OCI-LY7 (cell line): ENCODE measurements at regions of chr15 and their contacts with region 1.

Region 1: DNA sequence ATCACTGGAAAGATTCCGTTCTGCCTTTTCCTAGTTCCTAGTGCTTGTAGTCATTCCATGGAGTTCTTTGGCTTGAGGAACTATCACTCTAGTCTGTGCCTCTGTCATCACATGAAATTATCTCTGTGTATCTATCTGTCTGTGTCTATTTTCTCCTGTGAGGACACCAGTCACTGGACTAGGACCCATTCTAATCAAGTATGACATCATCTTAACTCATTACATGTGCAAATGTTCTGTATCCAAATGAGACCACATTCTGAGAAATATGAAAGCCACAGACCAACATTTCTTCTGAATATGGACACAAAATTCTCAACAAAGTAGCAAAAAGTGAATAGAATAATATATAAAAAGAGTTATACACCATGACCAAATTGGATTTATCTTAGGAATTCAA is 291.5 kb downstream of the GABRB3 start:
- DNase-seq: no peak
- H3K4me3 ChIP-seq: no peak overlapping the region
- H3K27ac ChIP-seq: no peak overlapping the region
- H3K4me1 ChIP-seq: no peaks in the 10 kb centered on the region
- CTCF ChIP-seq: no peak

Region 2: DNA sequence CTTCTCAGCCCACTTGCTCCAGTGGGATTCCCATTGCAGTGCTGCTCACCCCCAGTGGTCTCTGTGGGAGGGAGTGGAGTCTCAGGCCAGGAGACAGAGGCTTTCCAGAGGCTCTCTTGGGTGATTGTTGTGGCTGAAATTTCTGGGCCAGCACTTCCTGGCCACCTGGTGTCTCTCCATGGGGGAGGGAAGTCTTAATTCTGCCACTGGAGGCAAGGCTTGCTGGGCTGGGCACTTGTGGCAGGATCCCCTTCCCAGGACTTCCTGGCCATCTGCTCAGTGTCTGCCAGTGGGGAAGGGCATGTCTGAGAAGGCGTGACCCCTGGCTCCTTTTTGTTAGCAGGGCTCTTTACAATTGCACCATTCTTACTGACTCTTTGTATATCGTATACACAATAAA is 60.3 kb before region 1 on chr15:
- CTCF ChIA-PET with region 1: no interaction called
- POLR2A ChIA-PET with region 1: no interaction called
- intact Hi-C with region 1: loop called (anchors 10 kb)
- DNase-seq: no peak
- H3K4me3 ChIP-seq: no peak overlapping the region
- H3K27ac ChIP-seq: no peak overlapping the region
- H3K4me1 ChIP-seq: no peaks in the 10 kb centered on the region
- CTCF ChIP-seq: no peak

Region 3: GRCh38 chr15:26736502-26737248 is 255.3 kb after region 1 on chr15:
- CTCF ChIA-PET with region 1: no interaction called
- POLR2A ChIA-PET with region 1: no interaction called
- intact Hi-C with region 1: no loop called
- DNase-seq: no peak
- H3K4me3 ChIP-seq: no peak overlapping the region
- H3K27ac ChIP-seq: no peak overlapping the region
- H3K4me1 ChIP-seq: no peaks in the 10 kb centered on the region
- CTCF ChIP-seq: no peak

Region 4: DNA sequence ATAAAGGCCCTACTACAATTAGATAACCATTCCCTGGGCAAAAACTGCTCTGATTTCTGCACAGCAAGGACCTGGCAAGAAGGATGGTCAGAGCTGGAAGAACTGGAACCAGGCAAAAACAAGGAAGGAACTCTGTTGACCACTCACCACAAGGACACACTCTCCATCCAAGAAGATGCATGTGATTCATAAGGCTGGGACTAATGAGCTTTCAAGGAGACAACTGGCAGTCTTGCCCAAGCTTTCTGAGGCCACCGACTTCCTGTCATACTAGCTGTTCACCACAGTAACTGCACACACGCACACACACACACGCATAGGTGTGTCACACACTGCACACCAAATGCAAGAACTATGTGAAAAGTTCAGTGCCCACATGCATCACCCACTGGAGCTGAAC is 1361.2 kb after region 1 on chr15:
- CTCF ChIA-PET with region 1: no interaction called
- POLR2A ChIA-PET with region 1: no interaction called
- intact Hi-C with region 1: no loop called
- DNase-seq: no peak
- H3K4me3 ChIP-seq: no peak overlapping the region
- H3K27ac ChIP-seq: no peak overlapping the region
- H3K4me1 ChIP-seq: no peaks in the 10 kb centered on the region
- CTCF ChIP-seq: no peak